ENCODE measurements at regions of chr7 and their contacts with region 1.

Region 1: GRCh38 chr7:131654668-131655326 is 98.4 kb upstream of the PODXL start:
- DNase-seq: peak; percentile 92
- ATAC-seq: peak; percentile 99
- H3K4me3 Mint-ChIP-seq: no peak overlapping the region
- H3K27ac Mint-ChIP-seq: no peak overlapping the region
- H3K4me1 Mint-ChIP-seq: no peaks in the 10 kb centered on the region
- H3K27me3 Mint-ChIP-seq: peaks cover 5% of the 10 kb centered on the region
- CTCF ChIP-seq: peak; percentile 89

Region 2: GRCh38 chr7:131507592-131508331 is 147.0 kb before region 1 on chr7:
- CTCF ChIA-PET with region 1: interaction called, 23 read pairs
- POLR2A ChIA-PET with region 1: no interaction called
- intact Hi-C with region 1: loop called (anchors 2 kb)
- DNase-seq: peak; percentile 89
- ATAC-seq: peak; percentile 92
- H3K4me3 Mint-ChIP-seq: peak overlapping the region; percentile 3
- H3K27ac Mint-ChIP-seq: no peak overlapping the region
- H3K4me1 Mint-ChIP-seq: peaks cover 22% of the 10 kb centered on the region
- H3K27me3 Mint-ChIP-seq: peaks cover 6% of the 10 kb centered on the region
- CTCF ChIP-seq: peak; percentile 74

Region 3: DNA sequence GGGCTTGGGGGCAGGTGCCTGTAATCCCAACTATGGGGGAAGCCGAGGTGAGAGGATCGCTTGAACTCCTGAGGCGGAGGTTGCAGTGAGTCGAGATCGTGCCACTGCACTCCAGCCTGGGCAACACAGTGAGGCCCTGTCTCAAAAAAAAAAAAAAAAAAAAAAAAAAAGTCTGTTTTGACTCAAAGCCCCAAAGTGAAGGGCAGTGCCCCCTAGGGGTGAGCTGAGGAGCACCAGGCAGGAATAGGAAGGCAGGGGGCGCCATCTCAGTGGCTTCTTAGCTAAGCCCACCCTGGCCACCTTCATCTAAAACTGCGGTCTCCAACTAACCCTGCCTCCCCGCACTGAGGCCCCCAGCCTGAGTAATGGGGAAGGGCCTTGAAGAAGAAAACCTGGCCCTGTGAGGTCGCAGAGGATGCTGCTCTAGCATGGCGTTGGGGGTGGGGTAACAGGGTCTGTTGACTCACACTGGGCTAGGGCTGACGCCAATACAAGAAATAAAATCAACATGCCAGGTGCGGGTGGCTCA is 108.2 kb before region 1 on chr7:
- CTCF ChIA-PET with region 1: interaction called, 27 read pairs
- POLR2A ChIA-PET with region 1: no interaction called
- intact Hi-C with region 1: loop called (anchors 10 kb)
- DNase-seq: peak; percentile 74
- ATAC-seq: peak; percentile 81
- H3K4me3 Mint-ChIP-seq: no peak overlapping the region
- H3K27ac Mint-ChIP-seq: no peak overlapping the region
- H3K4me1 Mint-ChIP-seq: peaks cover 2% of the 10 kb centered on the region
- H3K27me3 Mint-ChIP-seq: peaks cover 3% of the 10 kb centered on the region
- CTCF ChIP-seq: peak; percentile 85

Region 4: DNA sequence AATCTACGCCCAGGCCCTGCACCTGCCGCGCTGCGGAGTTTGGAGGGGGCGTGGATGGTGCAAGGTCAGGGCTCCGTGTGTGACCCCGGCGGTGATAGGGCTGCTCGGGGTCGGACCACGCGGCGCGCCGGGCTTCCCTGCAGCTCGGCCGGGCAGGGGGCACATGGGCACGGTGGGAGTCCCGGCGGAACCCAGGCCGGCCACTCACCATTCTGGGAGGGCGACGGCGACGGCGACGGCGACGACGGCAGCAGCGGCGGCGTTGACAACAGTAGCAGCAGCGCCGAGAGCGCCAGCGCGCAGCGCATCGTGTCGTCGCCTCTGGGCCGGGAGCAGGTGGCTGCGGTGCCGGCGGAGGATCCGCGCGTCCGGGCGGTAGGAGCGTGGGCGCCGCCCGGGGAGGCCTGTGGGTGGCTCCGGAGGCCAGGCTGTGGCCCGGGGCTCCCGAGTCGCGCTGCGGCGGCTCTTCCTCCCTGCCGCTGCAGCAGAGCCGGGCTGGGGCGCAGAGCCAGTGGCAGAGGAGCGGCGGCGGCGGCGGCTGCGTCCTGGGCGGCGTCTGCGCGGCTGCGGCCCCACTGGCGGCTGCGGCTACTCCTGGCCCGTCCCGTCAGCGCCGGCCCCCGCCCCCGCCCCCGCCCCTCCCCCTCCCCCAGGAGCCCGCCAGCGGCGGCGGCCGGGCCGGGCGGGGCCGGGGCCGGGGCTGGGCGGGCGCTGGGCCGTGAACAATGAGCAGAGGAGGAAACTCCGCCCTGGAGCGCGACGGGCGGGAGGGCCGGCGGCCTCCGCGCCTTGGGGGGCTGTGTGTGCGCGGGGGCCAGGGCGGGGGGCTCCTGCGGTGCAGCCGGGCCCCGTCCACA is 98.5 kb before region 1 on chr7 and contains the start of gene PODXL:
- CTCF ChIA-PET with region 1: interaction called, 13 read pairs
- POLR2A ChIA-PET with region 1: no interaction called
- intact Hi-C with region 1: no loop called
- DNase-seq: peak; percentile 65
- ATAC-seq: peak; percentile 79
- H3K4me3 Mint-ChIP-seq: peak within 1 kb of the TSS; percentile 56
- H3K27ac Mint-ChIP-seq: no peak within 1 kb of the TSS
- H3K4me1 Mint-ChIP-seq: peaks cover 10% of the 10 kb centered on the region
- H3K27me3 Mint-ChIP-seq: peaks cover 47% of the 10 kb centered on the region
- CTCF ChIP-seq: no peak
- total RNA-seq, gene PODXL: 0.45 to 0.51 TPM

Region 5: DNA sequence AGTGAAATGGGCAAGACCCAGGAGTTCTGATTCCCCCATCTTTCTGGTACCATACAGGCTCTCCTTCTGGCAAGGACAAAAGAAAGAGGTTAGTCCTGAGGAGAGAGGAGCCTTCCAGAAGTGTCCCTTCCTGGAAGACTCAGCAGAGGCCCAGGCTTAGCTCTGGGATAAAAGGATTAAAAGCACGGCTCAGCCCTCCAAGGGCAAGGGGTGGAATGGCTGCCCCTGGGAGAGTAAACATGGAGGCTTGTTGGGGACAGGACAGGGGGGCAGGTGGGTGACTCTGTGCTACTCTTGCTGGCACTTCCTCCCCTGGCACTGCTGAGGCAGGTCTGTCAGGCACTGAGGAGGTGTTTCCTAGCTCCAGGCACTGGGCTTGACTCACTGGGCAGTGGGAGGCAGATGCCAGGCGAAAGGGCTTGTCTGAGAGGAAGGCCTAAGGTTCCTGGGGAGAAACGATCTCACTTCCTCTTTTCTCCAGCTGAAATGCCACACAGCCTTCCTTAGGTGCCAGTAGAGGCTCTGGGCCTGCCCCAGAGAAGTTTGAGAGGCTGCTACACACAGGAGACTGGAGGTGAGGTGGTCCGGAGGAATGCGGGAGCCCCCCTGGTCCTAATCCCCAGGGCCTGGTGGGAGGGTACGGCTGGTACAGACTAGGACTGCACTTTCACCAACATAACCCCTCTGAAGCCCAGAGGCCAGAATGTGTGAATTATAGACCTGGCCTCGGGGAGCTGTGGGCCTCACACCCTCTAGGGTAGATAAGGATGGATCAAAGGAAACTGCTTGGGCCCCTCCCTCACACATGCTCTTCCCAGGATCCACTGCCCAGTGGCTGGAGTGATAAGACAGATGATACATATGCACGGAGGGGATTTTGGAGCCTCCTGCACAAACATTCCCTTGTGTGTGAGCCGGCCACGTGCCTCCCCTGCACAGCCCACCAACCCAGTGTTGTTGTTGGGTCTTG is 35.2 kb before region 1 on chr7:
- CTCF ChIA-PET with region 1: no interaction called
- POLR2A ChIA-PET with region 1: no interaction called
- intact Hi-C with region 1: no loop called
- DNase-seq: no peak
- ATAC-seq: no peak
- H3K4me3 Mint-ChIP-seq: no peak overlapping the region
- H3K27ac Mint-ChIP-seq: no peak overlapping the region
- H3K4me1 Mint-ChIP-seq: no peaks in the 10 kb centered on the region
- H3K27me3 Mint-ChIP-seq: peaks cover 7% of the 10 kb centered on the region
- CTCF ChIP-seq: no peak

Measured in activated CD8-positive, alpha-beta T cell treated with anti-CD3 and anti-CD28 coated beads for 36 hours (primary cell).